ENCODE measurements at regions of chr7 and their contacts with region 1.

Region 1: GRCh38 chr7:90629297-90629918 is 33.3 kb downstream of the CDK14 start:
- DNase-seq: no peak
- ATAC-seq: peak; percentile 42 to 55

Region 2: GRCh38 chr7:90552521-90552920 is 76.9 kb before region 1 on chr7:
- intact Hi-C with region 1: loop called (anchors 2 to 10 kb)
- DNase-seq: no peak
- ATAC-seq: peak in 1 of 2 donors; percentile 43

Measured in left cardiac atrium (tissue), 4 donors.